ENCODE measurements at regions of chr12 and their contacts with region 1.

Region 1: GRCh38 chr12:53251477-53252348 is 16.4 kb upstream of the ESPL1 start:
- DNase-seq: peak; percentile 77
- ATAC-seq: peak; percentile 76
- H3K4me3 Mint-ChIP-seq: peak overlapping the region; percentile 98
- H3K27ac Mint-ChIP-seq: peak overlapping the region; percentile 90
- H3K4me1 Mint-ChIP-seq: peaks cover 49% of the 10 kb centered on the region
- H3K27me3 Mint-ChIP-seq: no peaks in the 10 kb centered on the region
- CTCF ChIP-seq: no peak

Region 2: GRCh38 chr12:53159195-53159839 is 92.4 kb before region 1 on chr12:
- CTCF ChIA-PET with region 1: interaction called, 7 read pairs
- POLR2A ChIA-PET with region 1: interaction called, 3 read pairs
- intact Hi-C with region 1: loop called (anchors 1 kb)
- DNase-seq: peak; percentile 78
- ATAC-seq: peak; percentile 100
- H3K4me3 Mint-ChIP-seq: no peak overlapping the region
- H3K27ac Mint-ChIP-seq: no peak overlapping the region
- H3K4me1 Mint-ChIP-seq: peaks cover 5% of the 10 kb centered on the region
- H3K27me3 Mint-ChIP-seq: no peaks in the 10 kb centered on the region
- CTCF ChIP-seq: peak; percentile 13

Region 3: GRCh38 chr12:53213348-53213747 is 38.4 kb before region 1 on chr12:
- CTCF ChIA-PET with region 1: interaction called, 19 read pairs
- POLR2A ChIA-PET with region 1: interaction called, 6 read pairs
- intact Hi-C with region 1: loop called (anchors 1 kb)
- DNase-seq: peak; percentile 82
- ATAC-seq: peak; percentile 75
- H3K4me3 Mint-ChIP-seq: no peak overlapping the region
- H3K27ac Mint-ChIP-seq: peak overlapping the region; percentile 6
- H3K4me1 Mint-ChIP-seq: peaks cover 76% of the 10 kb centered on the region
- H3K27me3 Mint-ChIP-seq: no peaks in the 10 kb centered on the region
- CTCF ChIP-seq: peak; percentile 49

Region 4: GRCh38 chr12:53220801-53221202 is 30.9 kb before region 1 on chr12:
- CTCF ChIA-PET with region 1: interaction called, 3 read pairs
- POLR2A ChIA-PET with region 1: interaction called, 11 read pairs
- intact Hi-C with region 1: loop called (anchors 1 kb)
- DNase-seq: peak; percentile 74
- ATAC-seq: peak; percentile 77
- H3K4me3 Mint-ChIP-seq: peak overlapping the region; percentile 89
- H3K27ac Mint-ChIP-seq: peak overlapping the region; percentile 96
- H3K4me1 Mint-ChIP-seq: peaks cover 48% of the 10 kb centered on the region
- H3K27me3 Mint-ChIP-seq: no peaks in the 10 kb centered on the region
- CTCF ChIP-seq: no peak

Region 5: DNA sequence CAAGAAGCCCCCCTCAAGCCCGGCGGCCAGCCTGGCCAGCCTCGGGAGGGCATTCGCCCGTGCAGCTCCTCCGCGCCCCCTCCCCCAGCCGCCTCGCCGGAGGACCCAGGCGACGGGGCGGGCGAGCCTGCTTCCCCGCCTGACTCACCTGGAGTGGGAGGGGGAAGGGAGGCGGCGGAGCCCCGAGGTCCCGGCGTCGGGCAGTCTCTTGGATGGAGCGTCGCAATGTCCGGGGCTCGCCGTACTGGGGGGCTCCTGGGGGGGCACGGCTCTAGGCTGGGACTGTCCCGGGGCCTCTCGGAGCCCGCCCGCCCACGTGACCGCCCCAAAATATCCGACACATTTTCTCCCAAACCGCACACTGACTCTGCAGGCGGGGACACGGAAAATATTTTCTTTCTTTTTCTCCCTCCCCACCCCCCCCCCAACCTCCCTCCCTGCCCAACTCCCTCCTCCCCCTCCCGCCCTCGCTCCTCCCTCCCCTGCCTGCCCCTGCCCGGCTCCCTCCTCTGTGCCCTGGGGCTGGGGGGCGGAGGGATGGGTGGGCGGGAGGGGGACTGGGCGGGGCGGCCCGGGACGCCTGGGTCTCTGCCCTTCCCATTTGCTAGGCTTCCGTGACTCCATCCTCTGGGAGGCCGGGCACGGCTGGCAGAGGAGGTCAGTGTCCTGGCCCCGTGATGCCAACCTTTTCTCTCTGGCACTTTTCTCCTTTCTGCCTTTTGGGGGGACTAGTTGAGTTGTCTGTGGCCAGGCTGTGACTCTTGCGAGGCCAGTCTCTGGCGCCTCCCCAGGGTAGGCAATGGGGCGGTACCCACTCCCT is 19.7 kb before region 1 on chr12 and contains the start of gene RARG:
- CTCF ChIA-PET with region 1: no interaction called
- POLR2A ChIA-PET with region 1: no interaction called
- intact Hi-C with region 1: loop called (anchors 2 kb)
- DNase-seq: no peak
- ATAC-seq: peak; percentile 67
- H3K4me3 Mint-ChIP-seq: peak within 1 kb of the TSS; percentile 81
- H3K27ac Mint-ChIP-seq: no peak within 1 kb of the TSS
- H3K4me1 Mint-ChIP-seq: peaks cover 36% of the 10 kb centered on the region
- H3K27me3 Mint-ChIP-seq: peaks cover 2% of the 10 kb centered on the region
- CTCF ChIP-seq: no peak
- total RNA-seq, gene RARG: 5.5 and 7.5 TPM in 2 replicates

Region 6: DNA sequence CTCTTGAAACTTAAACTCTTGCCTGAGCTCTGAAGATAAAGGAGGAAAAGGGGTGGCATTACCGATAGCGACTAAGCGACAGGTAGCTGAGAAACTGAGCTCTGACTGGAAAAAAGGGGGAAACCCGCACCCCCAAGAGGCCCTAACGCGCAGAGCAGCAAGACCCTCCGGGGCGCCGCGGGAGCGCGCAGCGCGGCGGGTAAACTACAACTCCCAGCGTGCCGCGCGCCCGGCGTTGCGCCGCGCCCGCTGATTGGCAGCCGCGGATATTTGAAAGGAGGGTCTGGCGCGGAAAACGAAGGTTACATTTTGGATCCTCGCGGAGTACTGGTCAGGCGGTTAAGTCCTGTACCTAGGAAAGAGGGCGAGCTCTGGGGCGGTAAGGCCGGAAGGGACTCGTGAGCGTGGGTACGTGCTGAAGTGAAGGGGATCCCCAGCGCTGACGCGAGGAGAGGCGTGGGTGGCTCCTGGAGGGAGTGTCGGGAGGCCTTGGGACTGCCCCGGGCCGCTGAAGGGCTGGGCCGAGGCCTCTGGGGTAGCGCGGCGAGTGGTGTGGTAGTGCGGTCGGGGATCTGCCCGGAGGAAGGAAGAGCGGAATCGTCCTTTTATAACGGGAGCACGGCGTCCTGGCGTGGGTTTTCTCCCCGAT is 16.4 kb after region 1 on chr12 and contains the start of gene ESPL1:
- CTCF ChIA-PET with region 1: interaction called, 27 read pairs
- POLR2A ChIA-PET with region 1: interaction called, 39 read pairs
- intact Hi-C with region 1: loop called (anchors 1 kb)
- DNase-seq: peak; percentile 84
- ATAC-seq: peak; percentile 94
- H3K4me3 Mint-ChIP-seq: peak within 1 kb of the TSS; percentile 98
- H3K27ac Mint-ChIP-seq: peak within 1 kb of the TSS; percentile 91
- H3K4me1 Mint-ChIP-seq: peaks cover 21% of the 10 kb centered on the region
- H3K27me3 Mint-ChIP-seq: no peaks in the 10 kb centered on the region
- CTCF ChIP-seq: no peak
- total RNA-seq, gene ESPL1: 6.2 and 8.2 TPM in 2 replicates

Region 7: DNA sequence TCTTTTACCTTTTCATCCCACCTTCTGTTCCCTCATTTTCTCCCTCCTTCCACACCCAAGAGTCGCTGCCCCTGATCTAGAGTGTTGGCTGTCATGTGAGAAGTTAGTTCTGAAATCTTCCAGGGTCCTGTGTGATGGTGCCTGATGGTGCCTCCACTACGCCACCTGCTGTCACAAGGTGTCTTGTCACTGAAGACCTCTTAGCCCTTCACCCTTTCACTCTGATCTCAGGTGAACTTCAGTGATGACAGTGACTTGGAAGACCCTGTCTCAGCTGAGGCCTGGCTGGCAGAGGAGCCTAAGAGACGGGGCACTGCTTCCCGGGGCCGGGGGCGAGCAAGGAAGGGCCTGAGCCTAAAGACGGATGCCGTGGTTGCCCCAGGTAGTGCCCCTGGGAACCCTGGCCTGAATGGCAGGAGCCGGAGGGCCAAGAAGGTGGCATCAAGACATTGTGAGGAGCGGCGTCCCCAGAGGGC is 36.1 kb after region 1 on chr12:
- CTCF ChIA-PET with region 1: interaction called, 3 read pairs
- POLR2A ChIA-PET with region 1: no interaction called
- intact Hi-C with region 1: loop called (anchors 1 kb)
- DNase-seq: peak; percentile 53
- ATAC-seq: peak; percentile 100
- H3K4me3 Mint-ChIP-seq: no peak overlapping the region
- H3K27ac Mint-ChIP-seq: no peak overlapping the region
- H3K4me1 Mint-ChIP-seq: peaks cover 4% of the 10 kb centered on the region
- H3K27me3 Mint-ChIP-seq: no peaks in the 10 kb centered on the region
- CTCF ChIP-seq: no peak

Region 8: GRCh38 chr12:53352331-53353256 is 100.9 kb after region 1 on chr12:
- CTCF ChIA-PET with region 1: no interaction called
- POLR2A ChIA-PET with region 1: no interaction called
- intact Hi-C with region 1: no loop called
- DNase-seq: peak; percentile 56
- ATAC-seq: peak; percentile 100
- H3K4me3 Mint-ChIP-seq: no peak overlapping the region
- H3K27ac Mint-ChIP-seq: peak overlapping the region; percentile 37
- H3K4me1 Mint-ChIP-seq: peaks cover 4% of the 10 kb centered on the region
- H3K27me3 Mint-ChIP-seq: no peaks in the 10 kb centered on the region
- CTCF ChIP-seq: no peak